Astrocyte of the cerebellum (primary cell): ENCODE measurements at regions of chr12 and their contacts with region 1.

Region 1: GRCh38 chr12:129294868-129295267 is 441.6 kb downstream of the GLT1D1 start:
- DNase-seq: no peak
- H3K4me3 ChIP-seq: no peak overlapping the region
- CTCF ChIP-seq: no peak

Region 2: GRCh38 chr12:129193263-129193871 is 101.5 kb before region 1 on chr12:
- in situ Hi-C with region 1: no loop called
- DNase-seq: no peak
- H3K4me3 ChIP-seq: no peak overlapping the region
- CTCF ChIP-seq: peak; percentile 68

Region 3: DNA sequence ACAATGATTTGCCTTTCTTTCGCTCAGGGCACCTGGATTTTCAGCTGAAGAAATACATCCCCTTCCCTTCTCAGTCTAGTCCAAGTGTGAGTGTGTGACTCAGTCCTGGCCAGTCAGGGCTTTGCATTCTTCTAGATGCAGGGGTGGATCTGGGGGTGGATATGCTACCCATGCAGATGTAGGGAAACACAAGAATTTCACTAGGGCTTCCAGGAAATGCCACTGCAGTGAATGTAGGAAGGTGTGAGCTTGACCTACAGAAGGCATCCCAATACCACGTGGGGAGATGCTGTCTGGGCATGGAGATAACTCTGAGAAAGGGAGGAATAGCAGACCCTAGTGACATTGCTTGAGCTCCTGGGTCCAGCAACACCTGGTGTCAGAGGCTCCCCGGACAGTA is 37.3 kb before region 1 on chr12:
- in situ Hi-C with region 1: loop called (anchors 5 kb)
- DNase-seq: no peak
- H3K4me3 ChIP-seq: no peak overlapping the region
- CTCF ChIP-seq: no peak

Region 4: GRCh38 chr12:129404556-129404955 is 109.7 kb after region 1 on chr12:
- in situ Hi-C with region 1: no loop called
- DNase-seq: no peak
- H3K4me3 ChIP-seq: no peak overlapping the region
- CTCF ChIP-seq: no peak